A549 (cell line): ENCODE measurements at regions of chr6 and their contacts with region 1.

Region 1: GRCh38 chr6:41318654-41319565 is 16.5 kb upstream of the NCR2 start:
- DNase-seq: peak; percentile 48 to 81
- ATAC-seq: peak; percentile 88 to 94
- H3K4me3 ChIP-seq: peak overlapping the region; percentile 33; the same call in 1 of the 3 replicates
- H3K27ac ChIP-seq: peak overlapping the region; percentile 39 to 80; a peak in 4 of 6 replicates
- H3K4me1 ChIP-seq: peaks cover 18% of the 10 kb centered on the region
- CTCF ChIP-seq: peak; percentile 74
- EP300 ChIP-seq: no peak
- POLR2A ChIP-seq: no peak
- RAD21 ChIP-seq: peak; percentile 78 to 83

Region 2: GRCh38 chr6:41214559-41215238 is 104.2 kb before region 1 on chr6:
- CTCF ChIA-PET with region 1: no interaction called
- POLR2A ChIA-PET with region 1: no interaction called
- DNase-seq: no peak
- ATAC-seq: no peak
- H3K4me3 ChIP-seq: no peak overlapping the region
- H3K27ac ChIP-seq: no peak overlapping the region
- H3K4me1 ChIP-seq: no peaks in the 10 kb centered on the region
- CTCF ChIP-seq: no peak
- EP300 ChIP-seq: no peak
- POLR2A ChIP-seq: no peak
- RAD21 ChIP-seq: no peak

Region 3: DNA sequence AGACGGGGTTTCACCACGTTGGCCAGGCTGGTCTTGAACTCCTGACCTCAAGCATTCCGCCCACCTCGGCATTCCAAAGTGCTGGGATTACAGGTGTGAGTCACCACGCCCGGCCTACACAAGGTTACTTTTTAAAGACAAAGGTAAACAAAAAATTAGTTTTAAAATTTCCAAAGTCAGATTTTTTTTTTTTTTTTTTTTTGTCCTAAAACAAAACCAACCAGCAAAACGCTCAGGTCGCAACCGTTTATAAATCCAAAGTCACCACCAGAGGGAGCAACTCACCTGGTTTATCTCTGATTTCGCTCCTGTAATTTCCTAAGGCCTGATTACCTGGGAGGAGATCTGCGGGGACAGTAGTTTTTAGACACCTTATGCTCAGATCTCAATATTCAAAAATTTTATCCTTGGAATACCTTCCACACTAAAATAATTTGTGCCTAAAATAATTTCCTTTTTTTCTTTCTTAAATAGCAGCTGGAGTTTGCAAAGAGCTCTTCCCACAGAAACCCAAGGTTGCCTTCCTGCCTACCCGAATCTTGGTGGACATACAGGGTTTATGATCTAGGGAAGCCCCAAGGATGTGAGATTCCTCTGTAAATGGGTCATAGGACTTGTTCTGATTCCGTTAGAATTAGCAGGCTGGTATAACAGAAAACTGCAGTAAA is 12.6 kb before region 1 on chr6:
- CTCF ChIA-PET with region 1: interaction called, 92 read pairs
- POLR2A ChIA-PET with region 1: no interaction called
- DNase-seq: peak; percentile 28 to 52
- ATAC-seq: peak in 1 of 2 experiments; percentile 61; a peak in 1 of 6 replicates
- H3K4me3 ChIP-seq: no peak overlapping the region; the same call in 2 of the 3 replicates
- H3K27ac ChIP-seq: no peak overlapping the region
- H3K4me1 ChIP-seq: peaks cover 3% of the 10 kb centered on the region; the same call in 1 of the 3 replicates
- CTCF ChIP-seq: peak; percentile 54
- EP300 ChIP-seq: no peak
- POLR2A ChIP-seq: no peak
- RAD21 ChIP-seq: peak; percentile 48 to 51

Region 4: DNA sequence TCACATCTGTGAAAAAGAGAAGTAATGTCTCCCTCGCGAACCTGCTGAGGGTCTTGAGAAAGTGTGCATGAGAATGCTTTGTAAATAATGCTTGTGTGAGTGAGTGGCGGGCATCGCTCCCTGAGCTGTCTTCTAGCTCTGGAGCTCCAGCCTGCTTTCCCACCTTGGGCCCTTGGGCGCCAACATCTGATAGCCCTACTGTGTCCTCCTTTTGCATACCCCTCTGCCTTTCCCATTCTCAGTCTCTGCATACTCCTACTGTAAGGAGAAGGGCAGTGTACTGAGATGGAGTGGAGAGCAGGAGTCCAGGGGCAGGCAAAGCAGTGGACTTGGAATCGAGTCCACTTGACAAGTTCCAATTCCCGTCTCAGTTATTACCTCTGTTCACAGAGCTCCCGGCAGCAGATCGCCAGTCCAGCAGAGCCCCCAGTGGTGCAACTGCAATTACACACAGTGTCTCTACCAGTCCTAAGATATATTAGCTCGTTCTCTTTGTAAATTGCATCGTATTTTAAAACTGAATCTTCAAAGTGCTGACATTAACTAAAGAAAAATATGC is 15.7 kb after region 1 on chr6:
- CTCF ChIA-PET with region 1: interaction called, 39 read pairs
- POLR2A ChIA-PET with region 1: no interaction called
- DNase-seq: no peak
- ATAC-seq: peak; percentile 75 to 77; a peak in 5 of 6 replicates
- H3K4me3 ChIP-seq: no peak overlapping the region
- H3K27ac ChIP-seq: no peak overlapping the region
- H3K4me1 ChIP-seq: no peaks in the 10 kb centered on the region
- CTCF ChIP-seq: no peak
- EP300 ChIP-seq: no peak
- POLR2A ChIP-seq: no peak
- RAD21 ChIP-seq: 0 out of 5 replicates have a peak, but pooled peaks of 1 of the 2 experiments have one; percentile 7